KBM-7 (cell line): ENCODE measurements at regions of chr16 and their contacts with region 1.

Region 1: GRCh38 chr16:46673320-46674013 is 15.5 kb downstream of the VPS35 start:
- DNase-seq: peak; percentile 80

Region 2: GRCh38 chr16:46568472-46569230 is 104.8 kb before region 1 on chr16:
- in situ Hi-C with region 1: no loop called
- DNase-seq: no peak

Region 3: DNA sequence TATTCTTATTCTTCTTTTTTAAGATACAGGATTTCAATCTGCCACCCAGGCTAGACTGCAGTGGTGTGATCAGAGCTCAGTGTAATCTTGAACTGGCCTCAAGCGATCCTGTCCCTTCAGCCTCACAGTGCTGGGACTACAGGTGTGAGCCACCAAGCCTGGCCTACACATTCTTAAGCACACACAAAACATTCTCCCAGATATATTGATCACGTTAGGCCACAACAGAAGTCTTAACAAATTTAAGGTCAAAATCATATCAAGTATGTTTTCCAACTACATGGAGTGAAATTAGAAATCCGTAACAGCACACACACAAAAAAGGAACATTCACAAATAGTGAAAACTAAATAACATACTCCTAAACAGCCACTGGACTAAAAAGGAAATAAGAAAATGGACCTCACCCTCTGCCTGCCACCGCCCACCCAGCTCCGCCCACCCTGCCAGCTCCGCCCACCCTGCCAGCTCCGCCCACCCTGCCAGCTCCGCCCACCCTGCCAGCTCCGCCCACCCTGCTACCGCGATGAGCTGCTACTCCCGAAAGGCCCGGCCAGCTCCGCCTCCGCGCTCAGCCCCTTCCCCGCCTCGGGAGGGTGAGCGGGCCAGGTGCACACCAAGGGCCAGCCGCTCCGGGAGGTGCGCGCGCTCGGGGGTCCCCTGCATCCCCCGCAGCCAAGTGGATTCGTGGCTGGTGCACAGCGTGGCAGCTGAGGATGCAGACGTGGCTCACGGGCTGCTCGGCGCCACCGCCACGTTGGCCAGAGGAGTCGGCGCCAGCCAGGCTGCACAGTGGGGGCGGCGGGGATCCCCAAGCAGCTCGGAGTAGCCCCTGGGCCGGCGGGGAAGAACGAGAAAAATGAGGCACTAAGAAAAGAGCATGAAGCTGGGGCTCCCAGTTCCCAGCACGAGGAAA is 116.3 kb after region 1 on chr16:
- in situ Hi-C with region 1: no loop called
- DNase-seq: no peak

Region 4: DNA sequence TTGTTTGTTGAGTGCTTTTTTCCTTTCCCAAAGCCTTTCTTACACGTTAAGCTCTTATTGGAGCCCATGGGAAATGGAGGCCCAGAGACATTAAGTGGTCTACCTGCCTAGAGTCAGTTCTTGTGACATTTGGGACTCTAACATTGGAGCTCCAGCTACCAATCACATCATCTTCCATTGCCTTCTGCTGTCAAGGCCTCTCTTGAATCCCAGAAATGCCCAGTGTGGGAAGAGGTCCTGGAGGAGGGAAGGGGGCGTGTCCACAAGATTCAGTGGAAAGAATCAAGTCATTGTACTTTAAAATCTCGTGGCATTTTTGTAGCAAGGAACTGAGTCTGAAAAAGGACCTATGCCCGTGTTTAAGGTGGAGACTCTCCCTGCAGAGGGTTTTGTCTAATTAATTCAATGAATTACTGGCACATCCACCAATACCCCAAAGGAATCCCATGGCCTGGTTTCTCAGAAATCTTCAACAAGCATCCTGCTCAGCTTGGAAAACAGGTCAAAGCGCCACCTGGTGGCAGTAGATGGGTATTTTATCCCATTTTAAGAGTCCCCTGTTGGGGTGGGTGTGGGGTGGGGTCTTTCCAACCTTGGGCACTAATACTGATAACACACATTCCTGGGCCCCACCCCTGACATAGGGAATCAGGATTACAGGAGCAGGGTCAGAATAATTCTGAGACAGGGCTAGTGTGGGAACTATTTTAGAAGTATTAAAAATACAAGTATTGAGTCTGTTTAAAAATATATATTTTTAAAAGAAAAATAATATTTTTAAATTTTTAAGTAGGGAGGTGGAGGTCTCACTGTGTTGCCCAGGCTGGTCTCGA is 235.3 kb after region 1 on chr16:
- in situ Hi-C with region 1: loop called (anchors 25 kb)
- DNase-seq: peak; percentile 60